HEK293 (cell line): ENCODE measurements at regions of chr17 and their contacts with region 1.

Region 1: GRCh38 chr17:42270596-42270995 is 5.6 kb downstream of the STAT5B start:
- H3K4me3 ChIP-seq: no peak overlapping the region
- H3K27ac ChIP-seq: no peak overlapping the region
- H3K4me1 ChIP-seq: peaks cover 52% of the 10 kb centered on the region
- CTCF ChIP-seq: no peak

Region 2: GRCh38 chr17:42248351-42249179 is 22.0 kb before region 1 on chr17:
- CTCF ChIA-PET with region 1: interaction called, 10 read pairs
- POLR2A ChIA-PET with region 1: interaction called, 4 read pairs
- H3K4me3 ChIP-seq: no peak overlapping the region
- H3K27ac ChIP-seq: peak overlapping the region; percentile 19; the same call in 1 of the 2 replicates
- H3K4me1 ChIP-seq: peaks cover 10% of the 10 kb centered on the region; the same call in 1 of the 2 replicates
- CTCF ChIP-seq: no peak

Region 3: GRCh38 chr17:42827472-42827871 is 556.9 kb after region 1 on chr17:
- CTCF ChIA-PET with region 1: no interaction called
- POLR2A ChIA-PET with region 1: no interaction called
- H3K4me3 ChIP-seq: no peak overlapping the region
- H3K27ac ChIP-seq: no peak overlapping the region
- H3K4me1 ChIP-seq: 0 out of 2 replicates have a peak, but pooled peaks cover 4% of the 10 kb centered on the region
- CTCF ChIP-seq: no peak